ENCODE measurements at regions of chr15 and their contacts with region 1.

Region 1: GRCh38 chr15:90886041-90886614 is 1.8 kb downstream of the FES start:
- DNase-seq: peak; percentile 70 to 79 (median 74)
- ATAC-seq: peak; percentile 51
- H3K4me3 ChIP-seq: no peak overlapping the region
- H3K27ac ChIP-seq: peak overlapping the region in 2 of 4 donors; percentile 68 to 80
- H3K4me1 ChIP-seq: peaks cover 47% of the 10 kb centered on the region
- H3K27me3 ChIP-seq: no peaks in the 10 kb centered on the region
- CTCF ChIP-seq: peak; percentile 93 to 98 (median 96)
- POLR2A ChIP-seq: peak in 1 of 3 donors; percentile 4

Region 2: DNA sequence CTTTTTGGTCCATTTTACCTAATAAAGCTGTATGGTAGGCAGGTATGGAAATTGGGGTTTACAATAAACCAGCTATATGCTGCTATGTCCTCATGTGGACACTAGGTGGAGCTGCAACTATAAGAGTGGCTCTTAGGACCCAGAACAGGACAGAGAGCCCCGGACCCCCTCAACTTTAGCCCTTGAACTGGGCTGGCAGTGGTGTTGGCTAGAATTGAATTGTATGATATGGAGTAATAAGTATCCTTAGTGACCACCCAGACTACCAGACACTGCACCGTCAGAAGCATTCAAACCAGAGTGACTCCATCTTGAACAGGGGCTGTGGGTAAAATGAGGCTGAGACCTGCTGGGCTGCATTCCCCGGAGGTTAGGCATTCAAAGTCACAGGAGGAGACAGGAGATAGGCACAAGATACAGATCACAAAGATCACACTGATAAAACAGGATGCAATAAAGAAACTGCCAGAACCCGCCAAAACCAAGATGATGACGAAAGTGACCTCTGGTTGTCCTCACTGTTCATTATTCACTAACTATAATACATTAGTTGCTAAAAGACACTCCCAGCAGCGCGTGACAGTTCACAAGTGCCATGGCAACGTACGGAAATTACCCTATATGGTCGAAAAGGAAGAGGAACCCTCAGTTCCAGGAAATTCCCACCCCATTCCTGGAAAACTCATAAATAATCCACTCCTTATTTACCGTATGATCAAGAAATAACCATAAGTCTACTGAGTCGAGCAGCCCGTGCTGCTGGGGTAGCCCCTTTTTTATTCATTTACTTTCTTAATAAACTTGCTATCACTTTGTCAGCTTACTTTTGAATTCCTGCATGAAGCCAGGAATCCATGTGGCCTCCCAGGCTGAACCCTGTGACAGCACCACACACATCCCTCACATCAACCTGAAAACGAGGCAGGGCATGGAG is 237.7 kb before region 1 on chr15:
- intact Hi-C with region 1: loop called (anchors 5 kb)
- DNase-seq: peak; percentile 64 to 80 (median 72)
- ATAC-seq: peak; percentile 67
- H3K4me3 ChIP-seq: no peak overlapping the region
- H3K27ac ChIP-seq: peak overlapping the region in 2 of 4 donors; percentile 40 to 61
- H3K4me1 ChIP-seq: peaks cover 5% of the 10 kb centered on the region
- H3K27me3 ChIP-seq: no peaks in the 10 kb centered on the region
- CTCF ChIP-seq: peak; percentile 77 to 89 (median 87)
- POLR2A ChIP-seq: no peak

Region 3: GRCh38 chr15:90716976-90717821 is 168.9 kb before region 1 on chr15 and contains the start of gene BLM:
- intact Hi-C with region 1: loop called (anchors 10 kb)
- DNase-seq: peak; percentile 95 to 97 (median 96)
- ATAC-seq: peak; percentile 100
- H3K4me3 ChIP-seq: peak within 1 kb of the TSS; percentile 24 to 49
- H3K27ac ChIP-seq: peak within 1 kb of the TSS; percentile 74 to 94 (median 84)
- H3K4me1 ChIP-seq: peaks cover 6% of the 10 kb centered on the region
- H3K27me3 ChIP-seq: no peaks in the 10 kb centered on the region
- CTCF ChIP-seq: peak in 6 of 7 experiments; percentile 23 to 72 (median 64)
- POLR2A ChIP-seq: peak in 2 of 3 donors; percentile 89
- total RNA-seq, gene BLM: 0.26 to 1.3 TPM

Region 4: GRCh38 chr15:90735923-90736322 is 150.2 kb before region 1 on chr15:
- intact Hi-C with region 1: no loop called
- DNase-seq: no peak
- ATAC-seq: no peak
- H3K4me3 ChIP-seq: no peak overlapping the region
- H3K27ac ChIP-seq: no peak overlapping the region
- H3K4me1 ChIP-seq: no peaks in the 10 kb centered on the region
- H3K27me3 ChIP-seq: no peaks in the 10 kb centered on the region
- CTCF ChIP-seq: no peak
- POLR2A ChIP-seq: no peak

Region 5: GRCh38 chr15:90954712-90955671 is 68.9 kb after region 1 on chr15 and contains the start of gene RCCD1:
- intact Hi-C with region 1: no loop called
- DNase-seq: peak; percentile 94 to 97 (median 96)
- ATAC-seq: peak; percentile 92
- H3K4me3 ChIP-seq: peak within 1 kb of the TSS; percentile 39 to 60
- H3K27ac ChIP-seq: peak within 1 kb of the TSS; percentile 72 to 98 (median 92)
- H3K4me1 ChIP-seq: peaks cover 31% of the 10 kb centered on the region
- H3K27me3 ChIP-seq: no peaks in the 10 kb centered on the region
- CTCF ChIP-seq: no peak
- POLR2A ChIP-seq: peak; percentile 35 to 79 (median 79)
- total RNA-seq, gene RCCD1: 13.7 to 21.4 TPM

Measured in body of pancreas (tissue), 4 donors.